ENCODE measurements at regions of chr7 and their contacts with region 1.

Region 1: DNA sequence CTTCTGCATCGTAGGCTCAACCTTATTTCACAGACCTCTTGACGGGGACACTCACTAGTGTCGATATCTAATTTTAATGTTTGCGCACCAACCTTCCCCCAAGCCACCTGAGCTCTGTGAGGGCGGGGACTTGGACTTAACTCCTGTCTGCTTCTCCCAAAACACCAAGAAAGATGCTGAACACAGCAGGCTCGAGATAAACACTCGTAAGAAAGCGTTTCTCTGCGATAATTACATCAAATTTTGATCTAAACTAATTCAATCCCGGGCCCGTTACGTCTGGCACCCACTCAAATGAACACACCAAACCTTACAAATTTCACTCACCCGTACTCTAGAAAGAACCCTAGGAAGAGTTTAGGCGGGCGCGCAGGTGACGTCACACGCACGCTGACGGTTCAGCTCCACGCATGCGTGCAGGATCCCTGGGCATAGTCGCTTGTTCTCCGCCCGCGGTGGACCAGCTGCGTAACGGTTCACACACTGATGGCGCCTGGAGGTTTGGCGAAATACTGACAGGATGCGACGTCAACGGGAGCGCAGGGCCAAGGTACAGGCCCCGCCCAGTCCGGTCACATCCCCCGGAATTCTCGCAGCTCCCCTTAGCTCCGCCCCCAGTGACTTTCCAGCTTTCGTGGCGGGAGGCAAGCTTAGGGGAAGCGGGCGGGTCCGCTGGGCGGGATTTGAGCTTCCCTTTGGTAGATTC is at the start of gene POT1:
- DNase-seq: peak; percentile 98 to 99
- H3K4me3 ChIP-seq: peak within 1 kb of the TSS; percentile 59
- H3K4me3 Mint-ChIP-seq: peak within 1 kb of the TSS; percentile 97
- H3K27ac Mint-ChIP-seq: peak within 1 kb of the TSS; percentile 95
- H3K4me1 ChIP-seq: peaks cover 5% of the 10 kb centered on the region
- H3K4me1 Mint-ChIP-seq: no peaks in the 10 kb centered on the region
- H3K27me3 ChIP-seq: no peaks in the 10 kb centered on the region
- H3K27me3 Mint-ChIP-seq: no peaks in the 10 kb centered on the region
- CTCF ChIP-seq: no peak
- total RNA-seq, gene POT1: 21.6 and 27.1 TPM in 2 replicates

Region 2: DNA sequence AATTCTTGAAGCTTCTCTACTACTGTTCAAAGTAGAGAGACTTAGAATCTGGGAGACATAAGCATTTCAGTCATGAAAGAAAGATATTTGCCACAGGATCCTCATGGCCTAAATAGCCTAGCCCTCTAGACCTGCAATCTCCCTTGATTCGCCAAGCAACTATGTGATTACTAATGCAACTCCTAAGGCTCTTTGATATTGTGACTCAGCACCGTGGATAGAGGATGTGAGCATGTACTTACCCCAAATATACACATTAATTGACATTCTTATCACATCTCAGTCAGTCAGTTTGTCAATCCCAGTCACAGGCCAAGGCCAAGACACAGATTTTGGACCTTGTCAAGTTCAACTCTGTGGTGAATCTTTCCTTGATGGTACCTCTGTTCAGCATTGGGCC is 206.6 kb before region 1 on chr7:
- CTCF ChIA-PET with region 1: no interaction called
- POLR2A ChIA-PET with region 1: no interaction called
- intact Hi-C with region 1: no loop called
- DNase-seq: no peak
- H3K4me3 ChIP-seq: no peak overlapping the region
- H3K4me3 Mint-ChIP-seq: no peak overlapping the region
- H3K27ac Mint-ChIP-seq: no peak overlapping the region
- H3K4me1 ChIP-seq: no peaks in the 10 kb centered on the region
- H3K4me1 Mint-ChIP-seq: no peaks in the 10 kb centered on the region
- H3K27me3 ChIP-seq: no peaks in the 10 kb centered on the region
- H3K27me3 Mint-ChIP-seq: no peaks in the 10 kb centered on the region
- CTCF ChIP-seq: no peak

Region 3: DNA sequence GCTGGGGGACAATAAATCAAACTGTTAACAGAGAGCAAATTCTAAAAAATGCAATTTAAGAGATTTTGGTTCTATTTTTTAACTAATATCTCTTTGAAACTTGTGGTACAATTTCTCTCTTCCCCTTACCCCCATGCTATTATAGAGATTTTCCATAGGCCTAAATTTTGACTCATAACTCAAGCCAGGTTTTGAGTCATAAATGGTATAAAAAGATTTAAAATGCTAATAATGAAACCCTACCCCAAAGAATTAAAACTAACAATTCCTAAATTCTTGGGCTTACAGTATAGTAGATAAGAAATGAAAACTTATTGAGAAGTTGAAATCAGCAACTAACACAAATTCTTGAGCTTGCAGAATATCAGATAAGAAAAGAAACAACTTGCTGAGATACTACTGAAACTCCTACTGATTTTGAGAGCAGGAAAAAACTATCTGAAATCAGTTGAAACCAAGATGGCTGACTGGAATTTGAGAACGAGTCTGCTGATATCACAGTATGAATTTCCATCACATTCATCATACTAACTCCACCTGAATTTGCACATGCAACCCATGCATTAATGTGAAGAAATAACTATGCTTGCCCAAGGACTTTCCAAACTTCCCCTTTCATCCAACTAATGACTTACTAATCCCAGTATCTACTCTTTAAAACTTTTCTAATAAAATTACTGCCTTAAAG is 36.3 kb before region 1 on chr7:
- CTCF ChIA-PET with region 1: no interaction called
- POLR2A ChIA-PET with region 1: no interaction called
- intact Hi-C with region 1: no loop called
- DNase-seq: no peak
- H3K4me3 ChIP-seq: no peak overlapping the region
- H3K4me3 Mint-ChIP-seq: no peak overlapping the region
- H3K27ac Mint-ChIP-seq: no peak overlapping the region
- H3K4me1 ChIP-seq: no peaks in the 10 kb centered on the region
- H3K4me1 Mint-ChIP-seq: no peaks in the 10 kb centered on the region
- H3K27me3 ChIP-seq: no peaks in the 10 kb centered on the region
- H3K27me3 Mint-ChIP-seq: no peaks in the 10 kb centered on the region
- CTCF ChIP-seq: no peak

Region 4: GRCh38 chr7:124940306-124940705 is 10.7 kb after region 1 on chr7:
- CTCF ChIA-PET with region 1: no interaction called
- POLR2A ChIA-PET with region 1: no interaction called
- intact Hi-C with region 1: no loop called
- DNase-seq: no peak
- H3K4me3 ChIP-seq: no peak overlapping the region
- H3K4me3 Mint-ChIP-seq: no peak overlapping the region
- H3K27ac Mint-ChIP-seq: no peak overlapping the region
- H3K4me1 ChIP-seq: no peaks in the 10 kb centered on the region
- H3K4me1 Mint-ChIP-seq: no peaks in the 10 kb centered on the region
- H3K27me3 ChIP-seq: no peaks in the 10 kb centered on the region; the same call in 1 of the 2 replicates
- H3K27me3 Mint-ChIP-seq: no peaks in the 10 kb centered on the region
- CTCF ChIP-seq: no peak

Region 5: DNA sequence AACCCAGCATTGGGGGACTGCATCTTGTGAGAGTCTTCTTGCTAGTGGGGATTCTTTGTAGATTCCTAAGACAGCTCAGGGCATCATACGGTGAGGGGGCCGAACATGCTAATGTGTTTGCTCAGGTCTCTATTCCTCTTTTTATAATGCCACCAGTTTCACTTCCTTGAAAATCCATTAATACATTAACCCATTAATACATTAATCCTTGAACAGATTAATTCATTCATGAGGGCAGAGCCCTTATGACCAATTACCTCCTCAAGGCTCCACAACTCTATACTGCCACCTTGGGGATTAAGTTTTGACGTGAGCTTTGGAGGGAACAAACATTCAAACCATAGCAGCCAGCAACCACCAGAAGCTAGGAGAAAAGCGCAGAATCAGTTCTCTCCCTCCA is 67.2 kb after region 1 on chr7:
- CTCF ChIA-PET with region 1: interaction called, 6 read pairs
- POLR2A ChIA-PET with region 1: no interaction called
- intact Hi-C with region 1: loop called (anchors 2 kb)
- DNase-seq: peak in 1 of 2 experiments; percentile 17
- H3K4me3 ChIP-seq: no peak overlapping the region
- H3K4me3 Mint-ChIP-seq: no peak overlapping the region
- H3K27ac Mint-ChIP-seq: no peak overlapping the region
- H3K4me1 ChIP-seq: peaks cover 31% of the 10 kb centered on the region
- H3K4me1 Mint-ChIP-seq: peaks cover 20% of the 10 kb centered on the region
- H3K27me3 ChIP-seq: no peaks in the 10 kb centered on the region
- H3K27me3 Mint-ChIP-seq: no peaks in the 10 kb centered on the region
- CTCF ChIP-seq: peak in 1 of 2 experiments; percentile 30

Region 6: DNA sequence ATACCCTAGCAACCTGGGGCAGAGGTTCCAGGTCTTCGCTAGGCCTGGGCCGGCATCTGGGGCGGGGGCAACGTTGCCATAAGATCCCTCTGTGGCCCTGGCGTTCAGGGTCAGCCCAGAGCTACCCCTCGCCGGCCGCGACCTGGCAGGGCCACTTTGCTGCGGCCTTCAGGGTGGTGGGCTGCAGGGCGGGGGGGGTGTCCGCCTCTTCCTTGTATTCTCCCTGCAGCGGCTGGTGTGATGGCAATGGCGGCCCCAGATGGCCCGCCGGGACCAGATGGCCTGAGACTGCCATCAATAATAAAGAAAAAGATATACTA is 539.2 kb after region 1 on chr7:
- CTCF ChIA-PET with region 1: no interaction called
- POLR2A ChIA-PET with region 1: no interaction called
- intact Hi-C with region 1: no loop called
- DNase-seq: no peak
- H3K4me3 ChIP-seq: no peak overlapping the region
- H3K4me3 Mint-ChIP-seq: no peak overlapping the region
- H3K27ac Mint-ChIP-seq: no peak overlapping the region
- H3K4me1 ChIP-seq: no peaks in the 10 kb centered on the region
- H3K4me1 Mint-ChIP-seq: no peaks in the 10 kb centered on the region
- H3K27me3 ChIP-seq: no peaks in the 10 kb centered on the region
- H3K27me3 Mint-ChIP-seq: peaks cover 8% of the 10 kb centered on the region
- CTCF ChIP-seq: no peak